Activated CD4-positive, alpha-beta memory T cell treated with anti-CD3 and anti-CD28 coated beads, Interleukin-2, amount 10 ng/mL, durations not matched to agents 7 days and 5 days (primary cell): ENCODE measurements at regions of chr9 and their contacts with region 1.

Region 1: DNA sequence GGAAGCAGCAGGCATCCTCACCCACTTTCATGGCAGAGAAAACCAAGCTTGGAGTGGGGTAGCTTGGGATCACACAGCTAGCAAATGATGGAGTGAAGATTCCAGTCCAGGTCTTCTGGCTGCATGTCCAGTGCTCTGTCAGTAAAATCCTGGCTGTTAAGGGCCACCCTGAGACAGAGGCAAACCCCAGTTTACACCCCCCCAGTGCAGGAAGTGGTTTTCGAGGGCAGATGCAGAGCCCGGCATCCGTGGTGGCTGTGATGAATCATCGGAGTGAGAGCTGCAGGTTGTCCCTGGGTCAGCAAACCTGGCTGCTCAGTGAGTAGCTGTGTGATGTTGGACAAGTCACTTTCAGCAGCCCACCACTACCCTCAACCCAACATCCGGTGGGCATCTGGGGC is 115.4 kb downstream of the RGS3 start:
- DNase-seq: peak; percentile 94
- H3K4me3 Mint-ChIP-seq: peak overlapping the region; percentile 67
- H3K27ac Mint-ChIP-seq: peak overlapping the region; percentile 98
- H3K4me1 Mint-ChIP-seq: peaks cover 72% of the 10 kb centered on the region
- H3K27me3 Mint-ChIP-seq: no peaks in the 10 kb centered on the region

Region 2: GRCh38 chr9:113275157-113276131 is 303.4 kb before region 1 on chr9 and contains the starts of genes CDC26 and PRPF4:
- CTCF ChIA-PET with region 1: interaction called, 25 read pairs
- POLR2A ChIA-PET with region 1: interaction called, 9 read pairs
- DNase-seq: peak; percentile 96
- H3K4me3 Mint-ChIP-seq: no peak within 1 kb of the TSS
- H3K27ac Mint-ChIP-seq: no peak within 1 kb of the TSS
- H3K4me1 Mint-ChIP-seq: peaks cover 39% of the 10 kb centered on the region
- H3K27me3 Mint-ChIP-seq: no peaks in the 10 kb centered on the region
- total RNA-seq, gene CDC26: 34.3 to 38.5 TPM
- total RNA-seq, gene PRPF4: 27.7 to 28.2 TPM

Region 3: GRCh38 chr9:113410207-113410864 is 168.5 kb before region 1 on chr9 and contains the starts of genes C9orf43 and POLE3:
- CTCF ChIA-PET with region 1: interaction called, 21 read pairs
- POLR2A ChIA-PET with region 1: interaction called, 25 read pairs
- DNase-seq: peak; percentile 95
- H3K4me3 Mint-ChIP-seq: peak within 1 kb of the TSS; percentile 98
- H3K27ac Mint-ChIP-seq: peak within 1 kb of the TSS; percentile 99
- H3K4me1 Mint-ChIP-seq: peaks cover 37% of the 10 kb centered on the region
- H3K27me3 Mint-ChIP-seq: no peaks in the 10 kb centered on the region
- total RNA-seq, gene C9orf43: 0.40 TPM
- total RNA-seq, gene POLE3: 52.5 to 55.8 TPM

Region 4: GRCh38 chr9:113454914-113455761 is 123.7 kb before region 1 on chr9:
- CTCF ChIA-PET with region 1: interaction called, 10 read pairs
- POLR2A ChIA-PET with region 1: no interaction called
- DNase-seq: no peak
- H3K4me3 Mint-ChIP-seq: no peak overlapping the region
- H3K27ac Mint-ChIP-seq: no peak overlapping the region
- H3K4me1 Mint-ChIP-seq: peaks cover 6% of the 10 kb centered on the region
- H3K27me3 Mint-ChIP-seq: no peaks in the 10 kb centered on the region

Region 5: DNA sequence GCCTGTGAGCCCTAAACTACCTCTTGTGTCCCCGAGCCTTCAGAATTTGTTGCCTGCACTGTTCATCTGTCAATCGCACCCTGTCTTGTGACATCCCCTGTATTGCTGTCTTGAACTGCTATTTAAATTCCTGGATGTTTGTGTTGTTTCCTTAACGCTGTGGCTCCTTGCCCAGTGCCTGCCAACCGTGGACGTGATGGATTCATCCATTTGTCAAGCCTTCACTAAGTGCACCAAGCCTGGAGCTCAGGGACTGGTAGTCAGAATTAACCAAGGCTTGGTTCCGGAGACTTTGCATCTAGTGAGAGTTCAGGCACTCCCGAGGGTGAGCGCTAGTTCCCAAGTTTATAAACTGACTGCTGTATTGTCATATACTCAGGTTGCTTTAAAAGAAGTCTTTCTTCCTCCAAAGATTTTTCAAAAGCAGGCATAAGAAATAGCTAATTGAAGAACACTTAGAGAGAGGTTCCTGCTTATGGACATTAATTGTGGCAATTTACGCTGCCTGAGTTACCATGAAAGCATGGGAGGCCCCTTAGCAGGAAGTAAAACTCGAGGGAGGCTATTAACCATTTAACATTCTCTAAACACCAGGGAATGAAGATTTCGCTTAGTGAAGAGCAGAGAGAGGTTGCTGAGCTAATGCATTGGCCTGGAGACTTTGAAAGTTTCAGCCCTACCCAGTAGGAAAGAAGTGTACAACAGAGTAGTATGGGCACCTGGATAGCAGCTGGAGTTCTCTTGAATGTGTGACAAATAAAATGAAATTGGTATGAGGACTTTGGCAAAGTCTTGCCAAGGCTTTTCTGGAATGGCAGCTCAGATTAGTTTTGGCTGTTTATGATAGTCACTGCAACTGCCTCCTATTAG is 86.3 kb before region 1 on chr9:
- CTCF ChIA-PET with region 1: no interaction called
- POLR2A ChIA-PET with region 1: no interaction called
- DNase-seq: no peak
- H3K4me3 Mint-ChIP-seq: no peak overlapping the region
- H3K27ac Mint-ChIP-seq: no peak overlapping the region
- H3K4me1 Mint-ChIP-seq: no peaks in the 10 kb centered on the region
- H3K27me3 Mint-ChIP-seq: peaks cover 6% of the 10 kb centered on the region

Region 6: DNA sequence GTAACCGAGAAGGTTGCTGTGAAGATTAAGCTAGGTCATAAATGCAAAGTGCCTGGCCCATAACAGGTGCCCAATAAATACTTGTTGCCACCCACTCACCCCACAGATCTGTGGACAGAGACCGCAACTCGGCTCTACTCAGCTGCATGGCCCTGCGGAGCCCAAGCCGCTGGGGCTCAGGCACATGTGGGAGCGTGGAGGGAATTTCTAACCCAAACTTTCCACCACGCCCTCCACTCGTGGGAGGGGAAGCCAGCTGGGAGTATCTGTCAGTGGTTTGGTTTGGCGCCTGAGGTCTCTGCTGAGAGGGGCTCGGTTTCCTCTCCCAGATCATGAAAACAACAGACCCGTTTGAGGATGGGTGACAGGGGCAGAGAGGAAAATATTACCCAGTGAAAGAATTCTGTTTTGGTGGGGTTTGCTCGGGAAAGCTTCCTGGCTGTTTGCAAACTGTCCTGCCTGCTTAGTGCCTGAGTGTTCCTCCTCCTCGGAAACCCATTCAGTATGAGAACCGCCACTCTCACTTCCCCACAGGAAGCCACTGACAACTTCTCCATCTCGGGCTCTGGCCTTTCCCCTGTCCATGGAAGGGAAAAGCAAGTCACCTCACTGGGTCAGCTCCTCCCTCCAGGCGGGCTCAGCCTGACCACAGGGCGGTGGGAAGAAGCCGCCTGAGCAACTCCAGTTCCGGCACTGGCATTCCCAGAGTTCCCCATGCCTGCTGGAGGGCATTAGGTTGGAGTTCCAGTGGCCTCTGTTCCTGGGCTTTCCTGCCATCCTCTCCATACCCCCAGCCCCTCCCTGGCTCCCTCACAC is 55.3 kb before region 1 on chr9:
- CTCF ChIA-PET with region 1: interaction called, 26 read pairs
- POLR2A ChIA-PET with region 1: interaction called, 59 read pairs
- DNase-seq: peak; percentile 52
- H3K4me3 Mint-ChIP-seq: peak overlapping the region; percentile 5
- H3K27ac Mint-ChIP-seq: peak overlapping the region; percentile 45
- H3K4me1 Mint-ChIP-seq: peaks cover 62% of the 10 kb centered on the region
- H3K27me3 Mint-ChIP-seq: no peaks in the 10 kb centered on the region

Region 7: GRCh38 chr9:113657703-113658544 is 79.0 kb after region 1 on chr9:
- CTCF ChIA-PET with region 1: interaction called, 27 read pairs
- POLR2A ChIA-PET with region 1: interaction called, 5 read pairs
- DNase-seq: peak; percentile 81
- H3K4me3 Mint-ChIP-seq: no peak overlapping the region
- H3K27ac Mint-ChIP-seq: no peak overlapping the region
- H3K4me1 Mint-ChIP-seq: peaks cover 7% of the 10 kb centered on the region
- H3K27me3 Mint-ChIP-seq: peaks cover 34% of the 10 kb centered on the region